ENCODE measurements at regions of chr12 and their contacts with region 1.

Region 1: GRCh38 chr12:42332301-42333285 is 6.6 kb downstream of the PPHLN1 start:
- DNase-seq: no peak
- H3K4me3 ChIP-seq: no peak overlapping the region
- H3K27ac ChIP-seq: no peak overlapping the region
- H3K4me1 ChIP-seq: peaks cover 0 to 7% of the 10 kb centered on the region in 2 donors
- H3K27me3 ChIP-seq: no peaks in the 10 kb centered on the region
- CTCF ChIP-seq: peak; percentile 48 to 67 (median 51)

Region 2: DNA sequence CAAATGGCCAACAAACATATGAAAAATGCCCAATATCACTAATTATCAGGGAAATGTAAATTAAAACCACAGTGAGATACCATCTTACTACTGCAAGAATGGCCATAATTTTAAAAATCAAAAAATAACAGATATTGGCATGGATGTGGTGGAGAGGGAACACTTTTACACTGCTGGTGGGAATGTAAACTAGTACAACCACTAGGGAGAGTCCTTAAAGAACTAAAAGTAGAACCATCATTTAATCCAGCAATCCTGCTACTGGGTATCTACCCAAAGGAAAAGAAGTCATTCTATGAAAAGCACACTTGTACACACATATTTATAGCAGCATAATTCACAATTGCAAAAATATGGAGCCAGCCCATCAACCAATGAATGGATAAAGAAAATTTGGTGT is 647.6 kb before region 1 on chr12:
- intact Hi-C with region 1: loop called (anchors 5 kb)
- DNase-seq: no peak
- H3K4me3 ChIP-seq: no peak overlapping the region
- H3K27ac ChIP-seq: no peak overlapping the region
- H3K4me1 ChIP-seq: no peaks in the 10 kb centered on the region
- H3K27me3 ChIP-seq: no peaks in the 10 kb centered on the region
- CTCF ChIP-seq: peak in 1 of 3 experiments; percentile 51

Region 3: DNA sequence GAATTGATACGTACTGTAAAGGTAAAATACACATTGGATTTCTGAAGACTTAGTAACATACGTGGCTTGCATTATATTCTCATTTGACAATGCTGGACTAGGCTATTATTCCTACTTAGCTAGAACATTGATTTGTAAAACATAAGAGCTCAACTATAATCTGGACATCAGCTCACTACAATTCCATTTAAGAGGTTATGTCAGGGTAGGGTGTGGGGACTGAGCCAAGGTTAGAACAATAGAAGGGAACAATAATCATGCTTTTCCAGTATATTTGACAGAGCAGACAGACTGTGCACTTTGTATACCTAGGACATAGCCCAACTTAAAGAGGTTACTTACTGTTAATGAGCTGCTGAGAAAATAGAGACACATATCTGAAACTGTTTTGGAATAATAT is 17.5 kb before region 1 on chr12:
- intact Hi-C with region 1: no loop called
- DNase-seq: no peak
- H3K4me3 ChIP-seq: no peak overlapping the region
- H3K27ac ChIP-seq: no peak overlapping the region
- H3K4me1 ChIP-seq: no peaks in the 10 kb centered on the region
- H3K27me3 ChIP-seq: no peaks in the 10 kb centered on the region
- CTCF ChIP-seq: no peak

Region 4: GRCh38 chr12:42407306-42407705 is 74.7 kb after region 1 on chr12:
- intact Hi-C with region 1: no loop called
- DNase-seq: no peak
- H3K4me3 ChIP-seq: no peak overlapping the region
- H3K27ac ChIP-seq: no peak overlapping the region
- H3K4me1 ChIP-seq: no peaks in the 10 kb centered on the region
- H3K27me3 ChIP-seq: no peaks in the 10 kb centered on the region
- CTCF ChIP-seq: no peak